ENCODE measurements at regions of chr21 and their contacts with region 1.

Region 1: DNA sequence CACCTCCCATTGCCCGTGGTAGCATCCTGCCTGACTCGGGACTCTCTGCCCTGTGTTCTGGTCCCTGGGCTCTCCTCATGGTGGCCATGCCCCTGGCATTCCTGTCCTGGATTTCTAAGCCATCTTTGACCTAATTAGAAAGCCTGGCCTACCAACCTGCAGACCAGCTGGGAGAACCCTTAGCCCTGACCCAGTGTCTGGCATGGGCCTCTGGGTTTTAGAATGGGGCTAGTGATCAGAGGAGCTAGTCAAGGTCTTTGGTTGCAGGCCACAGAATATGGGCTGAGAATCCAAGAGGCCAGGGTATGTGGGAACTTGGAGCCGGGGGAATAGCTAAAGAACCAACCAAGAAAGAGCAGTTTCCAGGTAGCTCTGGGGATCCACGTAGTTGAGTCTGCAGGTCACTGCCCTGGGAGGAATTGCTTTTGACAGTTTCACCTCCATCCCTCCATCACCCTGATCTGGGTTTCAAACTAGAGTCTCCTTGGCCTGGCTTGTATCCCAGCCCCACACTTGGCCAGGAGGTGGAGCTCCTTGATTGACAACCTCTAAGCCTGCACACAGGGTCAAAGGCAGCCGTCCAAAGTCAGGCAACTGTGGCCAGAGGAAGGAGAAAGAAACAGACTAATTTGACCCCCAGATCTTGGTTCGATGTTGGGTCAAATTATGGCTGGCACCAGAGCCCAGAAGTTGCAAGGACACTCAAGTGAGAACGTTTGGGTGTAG is 54.7 kb upstream of the ABCG1 start:
- DNase-seq: peak in 7 of 9 donors; percentile 18 to 50 (median 44)
- ATAC-seq: peak; percentile 80
- H3K4me3 ChIP-seq: no peak overlapping the region
- H3K4me3 Mint-ChIP-seq: no peak overlapping the region
- H3K27ac ChIP-seq: no peak overlapping the region
- H3K27ac Mint-ChIP-seq: peak overlapping the region in 5 of 9 donors; percentile 9 to 77 (median 64)
- H3K4me1 ChIP-seq: peaks cover 7 to 30% of the 10 kb centered on the region in 2 donors
- H3K4me1 Mint-ChIP-seq: peaks cover 27 to 56% (median 45%) of the 10 kb centered on the region in 7 donors
- H3K27me3 ChIP-seq: no peaks in the 10 kb centered on the region
- H3K27me3 Mint-ChIP-seq: peaks cover 0 to 7% (median 0%) of the 10 kb centered on the region in 5 donors

Region 2: DNA sequence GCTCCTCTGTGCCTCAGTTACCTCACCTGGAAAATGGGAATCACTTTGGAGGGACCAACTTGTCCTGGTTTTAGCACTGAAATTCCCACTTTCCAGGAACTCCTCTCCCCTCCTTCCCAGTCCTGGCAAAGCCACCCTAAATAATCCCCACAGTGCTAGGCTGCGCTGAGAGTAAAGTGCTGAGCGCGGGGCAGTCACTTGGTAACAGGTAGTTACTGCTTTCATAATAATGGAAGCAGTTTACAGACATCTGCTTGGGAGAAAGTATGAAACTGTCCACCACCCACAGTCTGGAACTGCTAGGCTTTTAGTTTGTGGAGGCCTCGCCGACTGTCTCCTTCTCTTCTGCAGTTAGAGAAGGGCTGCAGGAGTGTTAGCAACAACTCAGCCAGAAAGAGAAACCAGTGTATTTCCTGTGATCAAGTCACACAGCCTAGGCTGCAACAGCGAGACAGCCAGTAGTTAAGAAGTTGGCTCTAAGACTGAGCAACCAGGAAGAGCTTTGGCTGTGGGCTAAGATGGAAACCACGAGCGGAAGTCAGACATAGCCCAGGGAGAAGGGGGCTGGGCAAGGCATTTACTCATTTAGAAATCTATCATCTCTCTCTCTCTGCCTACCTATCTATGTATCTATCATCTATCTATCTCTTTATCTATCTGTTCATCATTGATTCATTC is 23.9 kb after region 1 on chr21:
- CTCF ChIA-PET with region 1: interaction called, 4 read pairs
- POLR2A ChIA-PET with region 1: no interaction called
- intact Hi-C with region 1: loop called (anchors 1 to 2 kb)
- DNase-seq: peak; percentile 39 to 90 (median 86)
- ATAC-seq: peak; percentile 96
- H3K4me3 ChIP-seq: peak overlapping the region; percentile 25
- H3K4me3 Mint-ChIP-seq: peak overlapping the region; percentile 39 to 90 (median 75)
- H3K27ac ChIP-seq: peak overlapping the region; percentile 85
- H3K27ac Mint-ChIP-seq: peak overlapping the region; percentile 91 to 98 (median 95)
- H3K4me1 ChIP-seq: peaks cover 73 to 90% of the 10 kb centered on the region in 2 donors
- H3K4me1 Mint-ChIP-seq: peaks cover 34 to 83% (median 65%) of the 10 kb centered on the region in 7 donors
- H3K27me3 ChIP-seq: no peaks in the 10 kb centered on the region
- H3K27me3 Mint-ChIP-seq: peaks cover 0 to 8% (median 0%) of the 10 kb centered on the region in 5 donors

Region 3: DNA sequence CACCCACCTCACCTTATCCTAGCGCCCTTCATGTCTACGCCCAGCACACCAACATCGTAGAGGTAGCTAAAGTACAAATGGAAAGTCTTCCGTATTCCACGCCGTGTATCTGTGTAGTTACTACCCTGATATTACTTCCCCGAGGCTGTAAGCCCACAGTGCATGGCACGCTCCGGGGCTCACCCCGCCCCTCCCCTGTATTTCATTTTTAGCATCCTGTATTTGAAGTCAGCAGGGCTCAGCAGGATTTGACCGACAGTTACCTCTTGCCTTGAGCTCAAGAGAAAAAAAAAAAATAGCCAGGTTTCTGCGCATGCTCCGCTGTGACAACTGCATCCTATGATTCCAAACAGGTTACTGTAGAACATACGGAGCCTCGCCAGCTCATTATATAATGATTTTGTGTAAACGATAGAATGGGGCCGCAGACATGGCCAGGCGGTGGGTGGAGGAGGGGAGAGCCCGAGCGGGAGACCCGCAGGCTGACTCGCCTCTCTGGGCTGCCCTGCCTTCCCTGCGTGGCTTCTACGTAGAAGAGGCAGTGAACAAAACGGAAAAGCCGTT is 56.0 kb after region 1 on chr21:
- CTCF ChIA-PET with region 1: no interaction called
- POLR2A ChIA-PET with region 1: interaction called, 5 read pairs
- intact Hi-C with region 1: loop called (anchors 1 to 2 kb)
- DNase-seq: peak; percentile 58 to 95 (median 93)
- ATAC-seq: peak; percentile 93
- H3K4me3 ChIP-seq: peak overlapping the region; percentile 69
- H3K4me3 Mint-ChIP-seq: peak overlapping the region; percentile 85 to 99 (median 93)
- H3K27ac ChIP-seq: peak overlapping the region; percentile 81
- H3K27ac Mint-ChIP-seq: peak overlapping the region; percentile 71 to 99 (median 91)
- H3K4me1 ChIP-seq: peaks cover 5 to 13% of the 10 kb centered on the region in 2 donors
- H3K4me1 Mint-ChIP-seq: peaks cover 21 to 44% (median 36%) of the 10 kb centered on the region in 7 donors
- H3K27me3 ChIP-seq: no peaks in the 10 kb centered on the region
- H3K27me3 Mint-ChIP-seq: peaks cover 0 to 3% (median 0%) of the 10 kb centered on the region in 5 donors

Region 4: GRCh38 chr21:42227909-42228708 is 63.9 kb after region 1 on chr21:
- CTCF ChIA-PET with region 1: interaction called, 4 read pairs
- POLR2A ChIA-PET with region 1: no interaction called
- intact Hi-C with region 1: loop called in 1 of 2 experiments (anchors 2 kb)
- DNase-seq: peak; percentile 72 to 97 (median 80)
- ATAC-seq: peak; percentile 94
- H3K4me3 ChIP-seq: peak overlapping the region; percentile 29
- H3K4me3 Mint-ChIP-seq: peak overlapping the region; percentile 47 to 77 (median 70)
- H3K27ac ChIP-seq: peak overlapping the region; percentile 71
- H3K27ac Mint-ChIP-seq: peak overlapping the region; percentile 78 to 96 (median 90)
- H3K4me1 ChIP-seq: peaks cover 44 to 45% of the 10 kb centered on the region in 2 donors
- H3K4me1 Mint-ChIP-seq: peaks cover 41 to 92% (median 86%) of the 10 kb centered on the region in 7 donors
- H3K27me3 ChIP-seq: no peaks in the 10 kb centered on the region
- H3K27me3 Mint-ChIP-seq: no peaks in the 10 kb centered on the region

Region 5: GRCh38 chr21:42454786-42455580 is 290.8 kb after region 1 on chr21:
- CTCF ChIA-PET with region 1: interaction called, 5 read pairs
- POLR2A ChIA-PET with region 1: no interaction called
- intact Hi-C with region 1: loop called in 1 of 2 experiments (anchors 1 kb)
- DNase-seq: no peak
- ATAC-seq: no peak
- H3K4me3 ChIP-seq: no peak overlapping the region
- H3K4me3 Mint-ChIP-seq: peak overlapping the region in 1 of 10 donors; percentile 17
- H3K27ac ChIP-seq: no peak overlapping the region
- H3K27ac Mint-ChIP-seq: peak overlapping the region in 2 of 9 donors; percentile 32 to 45
- H3K4me1 ChIP-seq: peaks cover 0 to 17% of the 10 kb centered on the region in 2 donors
- H3K4me1 Mint-ChIP-seq: peaks cover 19 to 61% (median 48%) of the 10 kb centered on the region in 7 donors
- H3K27me3 ChIP-seq: no peaks in the 10 kb centered on the region
- H3K27me3 Mint-ChIP-seq: no peaks in the 10 kb centered on the region